ENCODE measurements at regions of chr21 and their contacts with region 1.

Region 1: DNA sequence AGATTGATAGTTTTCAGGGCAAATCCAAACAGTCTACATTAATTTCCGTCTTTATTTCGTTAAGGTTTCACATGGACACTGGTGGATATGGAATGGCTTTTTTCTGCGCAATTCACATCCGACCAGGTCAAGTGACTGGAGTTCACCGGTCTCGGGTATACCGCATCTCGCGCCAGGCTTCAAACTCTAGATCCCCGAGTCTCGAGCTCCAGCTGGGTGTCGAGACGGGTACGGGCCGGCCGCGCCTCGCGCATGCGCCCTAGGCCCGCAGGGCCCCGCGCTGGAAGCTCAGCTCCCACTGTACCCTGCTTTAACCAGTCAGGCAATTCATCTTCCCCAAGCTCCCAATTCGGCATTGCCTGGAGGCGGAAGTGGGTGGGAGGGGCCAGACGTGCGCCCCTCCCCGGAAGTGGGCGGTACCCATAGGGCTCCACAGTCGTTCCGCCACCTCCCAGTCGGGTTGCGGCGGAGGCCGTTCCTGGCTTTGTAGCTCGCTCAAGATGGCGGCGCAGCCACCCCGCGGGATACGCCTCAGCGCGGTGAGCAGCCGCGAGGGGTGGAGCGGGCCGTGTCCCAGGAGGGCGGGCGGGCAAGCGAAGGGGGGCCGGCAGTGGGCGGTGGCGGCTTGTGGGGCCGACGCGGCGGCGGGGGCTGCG is at the start of gene MORC3:
- DNase-seq: peak; percentile 97 to 99 (median 98)
- ATAC-seq: peak; percentile 97 to 99 (median 98)
- H3K4me3 ChIP-seq: peak within 1 kb of the TSS; percentile 62 to 92 (median 81)
- H3K27ac ChIP-seq: peak within 1 kb of the TSS; percentile 94 to 99 (median 98)
- H3K4me1 ChIP-seq: peaks cover 0 to 49% (median 30%) of the 10 kb centered on the region in 12 donors
- H3K27me3 ChIP-seq: no peaks in the 10 kb centered on the region
- CTCF ChIP-seq: no peak
- POLR2A ChIP-seq: peak; percentile 71 to 87
- total RNA-seq, gene MORC3: 15.0 to 21.3 (median 18.8) TPM

Region 2: GRCh38 chr21:36135391-36136102 is 184.3 kb before region 1 on chr21:
- intact Hi-C with region 1: loop called in 1 of 10 experiments (anchors 2 kb)
- DNase-seq: peak; percentile 74 to 91 (median 82)
- ATAC-seq: peak; percentile 78 to 91 (median 88)
- H3K4me3 ChIP-seq: peak overlapping the region; percentile 42 to 94 (median 70)
- H3K27ac ChIP-seq: peak overlapping the region; percentile 72 to 95 (median 92)
- H3K4me1 ChIP-seq: peaks cover 3 to 44% (median 16%) of the 10 kb centered on the region in 12 donors
- H3K27me3 ChIP-seq: peaks cover 0 to 10% (median 0%) of the 10 kb centered on the region in 9 donors
- CTCF ChIP-seq: no peak
- POLR2A ChIP-seq: peak in 1 of 2 donors; percentile 78

Region 3: DNA sequence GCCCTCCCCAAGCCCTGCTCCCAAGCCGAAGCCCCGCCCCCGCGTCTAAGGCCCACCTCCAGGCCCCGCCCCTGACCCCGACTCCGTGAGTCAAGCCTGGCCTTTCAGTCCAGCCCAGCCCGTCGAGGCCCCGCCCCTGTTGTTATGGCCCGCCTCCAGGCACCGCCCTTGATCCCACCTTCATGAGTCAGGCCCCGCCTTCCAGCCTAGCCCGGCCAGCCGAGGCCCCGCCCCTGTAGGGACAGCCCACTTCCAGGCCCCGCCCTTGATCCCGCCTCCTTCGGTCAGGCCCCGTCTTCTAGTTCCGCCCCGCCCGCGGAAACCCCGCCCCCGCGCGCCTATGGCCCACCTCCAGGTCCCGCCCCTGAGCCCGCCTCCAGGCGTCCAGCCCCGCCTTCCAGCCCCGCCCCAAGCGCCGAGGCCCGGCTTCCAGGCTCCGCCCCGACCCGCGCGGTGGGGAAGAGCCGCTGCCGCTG is 163.5 kb before region 1 on chr21:
- intact Hi-C with region 1: loop called in 3 of 10 experiments (anchors 1 to 5 kb)
- DNase-seq: peak; percentile 99 to 100 (median 100)
- ATAC-seq: peak; percentile 95 to 98 (median 96)
- H3K4me3 ChIP-seq: peak overlapping the region; percentile 87 to 99 (median 96)
- H3K27ac ChIP-seq: peak overlapping the region; percentile 71 to 94 (median 90)
- H3K4me1 ChIP-seq: peaks cover 0 to 34% (median 13%) of the 10 kb centered on the region in 12 donors
- H3K27me3 ChIP-seq: no peaks in the 10 kb centered on the region
- CTCF ChIP-seq: no peak
- POLR2A ChIP-seq: no peak

Region 4: DNA sequence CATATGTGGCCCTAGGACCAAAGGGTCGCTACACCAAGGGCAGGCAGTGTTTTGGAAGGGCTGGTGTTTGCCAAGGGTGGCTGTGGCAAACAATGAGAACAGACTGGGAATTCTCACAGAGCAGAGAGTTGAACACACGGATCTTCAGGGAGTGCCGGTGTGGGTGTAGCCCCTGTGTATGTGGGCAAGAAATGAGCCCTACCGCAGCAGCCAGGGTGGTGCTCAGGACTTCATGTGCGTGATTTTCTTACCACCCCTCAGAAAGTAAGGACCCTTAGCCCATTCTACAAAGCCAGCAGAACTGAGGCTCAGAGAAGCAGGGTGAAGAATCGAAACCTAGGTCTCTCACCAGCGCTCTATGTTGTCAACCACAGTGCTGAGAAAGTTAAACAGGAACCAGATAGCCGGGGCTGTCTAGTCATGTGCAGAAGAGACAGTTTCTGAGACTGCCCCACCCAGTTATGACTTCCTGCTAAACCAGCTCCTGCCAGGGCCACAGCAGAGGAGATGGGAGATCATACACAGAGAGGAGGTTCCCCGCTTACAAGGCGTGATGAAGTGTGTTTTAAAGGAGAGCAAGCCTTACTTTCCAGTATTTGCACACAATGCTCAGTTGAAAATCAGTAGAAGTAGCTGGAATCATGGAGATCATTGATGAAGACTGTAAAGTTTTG is 21.8 kb before region 1 on chr21:
- intact Hi-C with region 1: loop called in 1 of 10 experiments (anchors 2 kb)
- DNase-seq: peak in 4 of 5 donors; percentile 35 to 53 (median 50)
- ATAC-seq: peak; percentile 61 to 94 (median 89)
- H3K4me3 ChIP-seq: peak overlapping the region in 3 of 12 donors; percentile 5 to 35 (median 23)
- H3K27ac ChIP-seq: peak overlapping the region in 7 of 12 donors; percentile 2 to 93 (median 17)
- H3K4me1 ChIP-seq: peaks cover 0 to 20% (median 0%) of the 10 kb centered on the region in 12 donors
- H3K27me3 ChIP-seq: no peaks in the 10 kb centered on the region
- CTCF ChIP-seq: no peak
- POLR2A ChIP-seq: no peak

Measured in heart left ventricle (tissue), 16 donors.